ENCODE measurements at regions of chr16 and their contacts with region 1.

Region 1: GRCh38 chr16:50368410-50369132 is at the start of gene BRD7:
- DNase-seq: peak; percentile 64
- H3K4me3 ChIP-seq: peak within 1 kb of the TSS; percentile 85 to 100 (median 98)
- H3K27ac ChIP-seq: peak within 1 kb of the TSS; percentile 77 to 91 (median 86)
- H3K4me1 ChIP-seq: peaks cover 18 to 49% (median 21%) of the 10 kb centered on the region in 4 donors
- H3K27me3 ChIP-seq: no peaks in the 10 kb centered on the region
- CTCF ChIP-seq: peak in 3 of 5 experiments; percentile 53 to 58 (median 53)
- EP300 ChIP-seq: no peak
- POLR2A ChIP-seq: no peak
- total RNA-seq, gene BRD7: 29.9 to 58.0 (median 38.5) TPM

Region 2: DNA sequence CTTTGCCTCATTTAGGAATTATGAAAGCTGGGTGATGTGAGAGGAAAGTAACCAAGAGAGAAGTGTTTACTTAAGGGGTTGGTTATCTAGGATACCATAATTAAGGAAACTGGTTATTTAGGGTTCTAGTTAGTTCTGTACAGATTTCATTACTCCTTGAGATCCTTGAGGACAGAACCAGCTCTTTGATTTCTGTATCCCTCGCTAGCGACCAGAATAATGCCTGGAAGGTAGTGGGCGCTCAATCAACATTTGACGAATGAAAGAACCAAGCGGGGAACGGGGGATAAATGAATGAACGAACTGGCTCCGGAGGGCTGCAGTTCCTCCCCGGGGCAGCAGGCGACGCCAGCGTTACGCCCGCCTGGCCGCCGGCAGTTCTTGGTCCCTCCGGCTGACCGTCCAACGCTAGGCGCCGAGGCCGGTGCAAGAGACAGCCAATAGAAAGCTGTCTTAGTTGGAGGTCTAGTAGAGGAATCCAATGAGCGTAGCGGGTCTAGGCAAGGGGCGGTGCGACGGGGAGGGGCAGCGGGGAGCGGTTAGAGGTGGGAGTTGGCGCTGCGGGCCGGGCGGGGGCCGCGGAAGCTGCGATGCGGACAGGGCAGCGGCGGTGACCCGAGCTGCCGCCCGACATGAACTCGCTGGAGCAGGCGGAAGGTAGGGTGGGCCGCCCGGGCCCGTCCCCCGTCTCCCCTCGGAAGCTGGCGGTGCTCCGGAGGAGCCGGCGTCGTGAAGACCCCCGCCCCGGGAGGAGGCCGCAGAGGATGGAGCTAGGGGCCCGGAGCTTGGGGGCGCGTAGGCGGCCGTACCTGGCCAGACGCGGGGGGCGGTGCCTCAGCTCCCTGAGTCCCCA is 343.7 kb before region 1 on chr16 and contains the start of gene CNEP1R1:
- in situ Hi-C with region 1: loop called in 1 of 4 experiments (anchors 25 kb)
- intact Hi-C with region 1: no loop called
- DNase-seq: peak; percentile 96
- H3K4me3 ChIP-seq: peak within 1 kb of the TSS; percentile 86 to 97 (median 94)
- H3K27ac ChIP-seq: peak within 1 kb of the TSS; percentile 85 to 93 (median 90)
- H3K4me1 ChIP-seq: peaks cover 0 to 35% (median 19%) of the 10 kb centered on the region in 4 donors
- H3K27me3 ChIP-seq: no peaks in the 10 kb centered on the region
- CTCF ChIP-seq: peak; percentile 100
- EP300 ChIP-seq: peak; percentile 15
- POLR2A ChIP-seq: peak; percentile 76
- total RNA-seq, gene CNEP1R1: 7.6 to 21.6 (median 14.9) TPM

Region 3: DNA sequence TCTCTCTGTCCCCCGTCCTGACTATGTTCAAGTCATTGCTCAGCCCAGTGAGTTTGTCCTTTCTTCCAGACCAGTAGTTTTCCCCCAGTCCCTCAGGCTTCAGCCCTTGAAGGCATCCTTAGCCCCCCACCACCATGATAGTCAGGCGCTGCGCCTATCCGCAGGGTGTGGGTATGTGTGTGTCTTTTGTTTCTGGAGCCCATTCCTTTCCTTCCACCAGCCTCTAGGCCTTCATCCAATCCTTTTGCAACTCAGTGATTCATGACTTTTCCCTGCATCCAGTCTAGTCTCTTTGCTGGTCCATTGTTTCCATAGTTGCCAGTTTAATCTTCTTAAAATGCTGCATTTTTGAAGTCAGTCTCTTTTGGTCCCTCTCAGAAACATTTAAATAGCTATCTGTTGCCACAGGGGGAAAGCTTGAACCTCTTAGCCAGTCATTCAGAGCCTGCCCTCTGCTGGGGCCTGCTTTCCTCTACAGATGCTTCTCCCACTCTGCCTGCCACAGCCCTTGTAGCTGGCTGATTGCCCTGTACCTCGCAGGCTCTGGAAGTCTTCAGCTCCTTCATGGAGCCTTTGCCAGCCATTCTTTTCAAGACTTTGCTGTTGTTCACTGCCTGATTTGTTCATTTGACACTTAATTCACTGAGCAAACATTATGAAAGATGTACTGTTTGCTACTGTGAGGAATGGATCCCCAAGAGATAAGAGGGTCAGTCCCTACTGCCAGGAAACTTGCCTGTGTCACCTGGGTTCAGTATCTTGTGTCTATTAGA is 158.1 kb before region 1 on chr16:
- in situ Hi-C with region 1: no loop called
- intact Hi-C with region 1: loop called (anchors 10 kb)
- DNase-seq: peak; percentile 82
- H3K4me3 ChIP-seq: no peak overlapping the region
- H3K27ac ChIP-seq: peak overlapping the region; percentile 59 to 70 (median 68)
- H3K4me1 ChIP-seq: peaks cover 32 to 45% (median 36%) of the 10 kb centered on the region in 4 donors
- H3K27me3 ChIP-seq: no peaks in the 10 kb centered on the region
- CTCF ChIP-seq: peak; percentile 62 to 84 (median 65)
- EP300 ChIP-seq: no peak
- POLR2A ChIP-seq: no peak

Region 4: GRCh38 chr16:50245417-50246298 is 122.9 kb before region 1 on chr16:
- in situ Hi-C with region 1: loop called in 1 of 4 experiments (anchors 25 kb)
- intact Hi-C with region 1: no loop called
- DNase-seq: peak; percentile 68
- H3K4me3 ChIP-seq: peak overlapping the region; percentile 46 to 78 (median 67)
- H3K27ac ChIP-seq: peak overlapping the region; percentile 47 to 60 (median 51)
- H3K4me1 ChIP-seq: peaks cover 8 to 34% (median 20%) of the 10 kb centered on the region in 4 donors
- H3K27me3 ChIP-seq: no peaks in the 10 kb centered on the region
- CTCF ChIP-seq: peak in 2 of 5 experiments; percentile 18 to 20
- EP300 ChIP-seq: no peak
- POLR2A ChIP-seq: no peak

Region 5: DNA sequence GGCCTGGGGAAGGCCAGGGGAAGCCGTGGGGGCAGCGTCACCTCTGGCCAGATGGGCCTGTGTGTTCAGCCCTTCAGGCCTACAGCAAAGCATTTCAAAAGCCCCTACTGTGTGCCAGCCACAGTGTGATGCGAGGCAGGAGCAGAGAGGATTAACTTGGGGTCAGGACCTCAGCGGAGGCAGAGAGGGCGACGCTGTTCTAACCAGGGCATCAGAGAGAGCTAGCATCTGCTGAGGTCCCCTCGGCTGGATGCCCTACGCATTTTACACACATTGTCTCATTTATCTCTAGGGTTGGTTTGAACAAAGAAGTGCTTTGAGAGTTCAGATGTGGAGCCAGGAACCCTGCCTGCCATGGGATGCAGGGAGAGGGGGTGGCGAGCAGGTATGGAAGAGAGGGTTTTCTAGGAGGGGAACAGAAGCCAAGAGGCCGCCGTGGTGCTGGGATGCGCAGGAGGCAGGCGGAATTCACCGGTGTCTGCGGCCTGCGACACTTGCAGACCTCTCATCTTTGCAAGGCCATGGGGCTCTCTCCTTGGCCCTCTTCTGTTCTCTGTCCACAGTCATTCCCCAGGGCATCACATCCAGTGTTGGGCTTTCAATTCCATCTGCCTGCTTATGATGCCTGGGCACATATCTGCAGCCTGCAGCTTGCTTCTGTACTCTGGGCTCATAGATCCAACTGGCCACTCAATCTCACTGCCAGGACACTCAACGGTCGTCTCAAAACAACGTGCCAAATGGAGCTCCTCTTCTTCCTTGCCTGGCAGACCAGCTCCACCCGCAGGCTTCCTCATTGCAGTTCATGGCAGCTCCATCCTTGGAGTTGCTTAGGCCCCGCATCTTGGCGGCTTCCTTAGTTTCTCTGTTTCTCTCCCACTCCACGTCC is 171.5 kb after region 1 on chr16:
- in situ Hi-C with region 1: no loop called
- intact Hi-C with region 1: loop called (anchors 10 kb)
- DNase-seq: no peak
- H3K4me3 ChIP-seq: no peak overlapping the region
- H3K27ac ChIP-seq: no peak overlapping the region
- H3K4me1 ChIP-seq: no peaks in the 10 kb centered on the region
- H3K27me3 ChIP-seq: no peaks in the 10 kb centered on the region
- CTCF ChIP-seq: no peak
- EP300 ChIP-seq: no peak
- POLR2A ChIP-seq: no peak

Region 6: GRCh38 chr16:50665128-50665878 is 296.7 kb after region 1 on chr16:
- in situ Hi-C with region 1: loop called (anchors 10 to 25 kb)
- intact Hi-C with region 1: loop called (anchors 10 kb)
- DNase-seq: peak; percentile 82
- H3K4me3 ChIP-seq: peak overlapping the region; percentile 18 to 54 (median 32)
- H3K27ac ChIP-seq: peak overlapping the region; percentile 36 to 69 (median 68)
- H3K4me1 ChIP-seq: peaks cover 0 to 10% (median 6%) of the 10 kb centered on the region in 4 donors
- H3K27me3 ChIP-seq: no peaks in the 10 kb centered on the region
- CTCF ChIP-seq: peak; percentile 81 to 94 (median 91)
- EP300 ChIP-seq: no peak
- POLR2A ChIP-seq: no peak

Region 7: GRCh38 chr16:50781043-50781442 is 412.5 kb after region 1 on chr16:
- in situ Hi-C with region 1: loop called in 1 of 4 experiments (anchors 25 kb)
- intact Hi-C with region 1: no loop called
- DNase-seq: no peak
- H3K4me3 ChIP-seq: no peak overlapping the region
- H3K27ac ChIP-seq: no peak overlapping the region
- H3K4me1 ChIP-seq: peaks cover 0 to 7% (median 0%) of the 10 kb centered on the region in 4 donors
- H3K27me3 ChIP-seq: no peaks in the 10 kb centered on the region
- CTCF ChIP-seq: no peak
- EP300 ChIP-seq: no peak
- POLR2A ChIP-seq: no peak

Region 8: GRCh38 chr16:52078716-52079655 is 1710.4 kb after region 1 on chr16:
- in situ Hi-C with region 1: no loop called
- intact Hi-C with region 1: no loop called
- DNase-seq: no peak
- H3K4me3 ChIP-seq: no peak overlapping the region
- H3K27ac ChIP-seq: no peak overlapping the region
- H3K4me1 ChIP-seq: no peaks in the 10 kb centered on the region
- H3K27me3 ChIP-seq: no peaks in the 10 kb centered on the region
- CTCF ChIP-seq: no peak
- EP300 ChIP-seq: no peak
- POLR2A ChIP-seq: no peak